Astrocyte of the cerebellum (primary cell): ENCODE measurements at regions of chr9 and their contacts with region 1.

Region 1: GRCh38 chr9:5186416-5187169 is 1.2 kb upstream of the INSL6 start:
- DNase-seq: peak; percentile 57
- H3K4me3 ChIP-seq: no peak overlapping the region
- CTCF ChIP-seq: peak; percentile 75

Region 2: GRCh38 chr9:5442400-5443011 is 255.9 kb after region 1 on chr9:
- in situ Hi-C with region 1: loop called (anchors 10 kb)
- DNase-seq: no peak
- H3K4me3 ChIP-seq: no peak overlapping the region
- CTCF ChIP-seq: peak; percentile 60